Sigmoid colon (tissue), 7 donors: ENCODE measurements at regions of chr5 and their contacts with region 1.

Region 1: DNA sequence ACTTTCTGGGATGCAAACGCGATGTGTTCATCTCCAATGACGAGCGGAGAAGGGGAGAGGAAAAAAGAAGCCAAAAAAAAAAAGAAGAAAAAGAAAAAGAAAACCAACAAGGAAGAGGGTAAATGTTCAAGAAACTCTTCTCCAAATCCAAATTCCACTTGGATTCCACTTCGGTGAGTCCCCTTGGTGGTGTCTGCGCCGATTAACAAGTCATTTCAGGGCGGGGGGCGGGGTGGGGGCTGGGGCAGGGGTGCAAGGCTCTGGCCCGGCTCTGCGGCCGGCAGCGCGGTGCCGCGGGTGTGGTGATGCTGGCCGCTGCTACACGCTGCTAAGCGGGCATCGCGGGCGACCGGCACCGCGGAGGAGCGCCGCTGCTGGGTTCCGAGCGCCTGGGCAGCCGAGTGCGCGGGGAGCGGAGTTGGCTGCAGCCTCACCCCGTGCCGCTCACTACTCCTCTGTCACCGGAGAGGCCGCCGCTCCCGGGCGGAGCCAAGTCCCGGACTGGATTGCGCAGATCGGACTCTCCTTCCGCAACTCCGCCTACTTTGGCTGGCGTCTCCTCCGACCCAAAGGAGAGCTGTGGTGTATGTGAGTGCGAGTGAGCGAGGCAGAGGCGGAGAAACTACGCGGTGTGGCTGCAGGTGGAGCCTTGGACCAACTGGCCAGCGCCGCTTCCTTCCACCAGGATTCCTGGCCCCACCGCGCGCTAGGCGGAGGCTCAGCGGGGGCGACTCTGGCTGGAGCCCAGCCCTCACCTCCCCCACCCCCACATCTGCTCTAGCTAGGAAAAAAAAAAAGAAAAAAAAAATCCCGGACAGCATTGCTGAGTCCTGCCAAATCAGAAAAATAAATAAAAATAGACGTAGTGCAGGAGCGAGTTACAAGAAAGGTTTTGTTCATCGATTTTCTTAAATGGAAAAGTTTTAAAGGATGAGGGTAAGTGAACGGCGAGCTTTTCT is at the start of gene SEMA6A:
- DNase-seq: peak; percentile 97
- H3K4me3 ChIP-seq: peak within 1 kb of the TSS; percentile 79 to 83 (median 82)
- H3K27ac ChIP-seq: peak within 1 kb of the TSS; percentile 80 to 85 (median 82)
- H3K4me1 ChIP-seq: peaks cover 6 to 38% (median 20%) of the 10 kb centered on the region in 4 donors
- H3K27me3 ChIP-seq: no peaks in the 10 kb centered on the region
- CTCF ChIP-seq: peak in 1 of 4 experiments; percentile 29
- EP300 ChIP-seq: peak in 1 of 4 donors; percentile 10
- POLR2A ChIP-seq: peak; percentile 33 to 80
- total RNA-seq, gene SEMA6A: 25.0 to 55.7 (median 39.5) TPM

Region 2: DNA sequence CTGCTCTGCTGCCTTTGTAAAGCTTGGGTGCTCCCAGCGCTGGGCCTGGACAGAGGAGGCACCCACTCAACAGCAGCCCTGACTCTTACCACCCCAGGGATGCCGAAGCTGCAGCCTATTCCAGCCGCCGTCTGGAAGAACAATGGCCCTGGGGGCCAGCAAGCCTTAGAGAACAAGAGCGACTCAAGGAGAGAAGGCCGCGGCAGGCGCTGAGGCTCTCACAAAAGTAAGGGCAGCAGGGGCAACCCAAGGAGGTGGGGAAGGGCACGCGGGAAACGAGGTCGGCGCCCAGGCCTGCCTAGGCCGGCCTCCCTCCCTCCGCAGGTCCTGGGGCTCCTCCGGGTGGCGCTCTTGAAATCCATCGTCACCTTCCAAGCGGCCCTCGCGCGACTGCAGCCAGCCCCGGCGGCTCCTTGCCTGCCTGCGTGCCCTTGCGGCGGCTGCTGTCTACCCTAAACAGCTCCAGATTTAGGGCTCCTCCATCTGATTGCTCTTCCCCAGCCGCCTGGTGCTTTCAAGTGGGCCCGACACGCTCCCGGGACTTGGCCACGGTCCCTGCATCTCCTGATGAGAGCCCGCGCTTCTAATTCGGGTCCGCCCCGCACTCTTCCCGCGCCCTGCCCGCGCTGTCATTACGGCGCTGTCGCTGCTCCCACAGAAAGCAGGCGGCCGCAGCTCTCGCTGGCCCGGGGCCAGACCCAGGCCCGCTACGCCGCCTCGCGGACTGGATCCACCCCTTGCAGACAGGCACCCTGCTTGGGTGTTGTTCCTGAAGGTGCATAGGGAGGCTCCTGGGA is 213.3 kb before region 1 on chr5:
- intact Hi-C with region 1: loop called (anchors 2 kb)
- DNase-seq: peak; percentile 84
- H3K4me3 ChIP-seq: peak overlapping the region; percentile 30 to 52 (median 47)
- H3K27ac ChIP-seq: peak overlapping the region; percentile 31 to 77 (median 74)
- H3K4me1 ChIP-seq: peaks cover 0 to 42% (median 30%) of the 10 kb centered on the region in 4 donors
- H3K27me3 ChIP-seq: no peaks in the 10 kb centered on the region
- CTCF ChIP-seq: peak in 3 of 4 experiments; percentile 22 to 40 (median 38)
- EP300 ChIP-seq: no peak
- POLR2A ChIP-seq: no peak

Region 3: DNA sequence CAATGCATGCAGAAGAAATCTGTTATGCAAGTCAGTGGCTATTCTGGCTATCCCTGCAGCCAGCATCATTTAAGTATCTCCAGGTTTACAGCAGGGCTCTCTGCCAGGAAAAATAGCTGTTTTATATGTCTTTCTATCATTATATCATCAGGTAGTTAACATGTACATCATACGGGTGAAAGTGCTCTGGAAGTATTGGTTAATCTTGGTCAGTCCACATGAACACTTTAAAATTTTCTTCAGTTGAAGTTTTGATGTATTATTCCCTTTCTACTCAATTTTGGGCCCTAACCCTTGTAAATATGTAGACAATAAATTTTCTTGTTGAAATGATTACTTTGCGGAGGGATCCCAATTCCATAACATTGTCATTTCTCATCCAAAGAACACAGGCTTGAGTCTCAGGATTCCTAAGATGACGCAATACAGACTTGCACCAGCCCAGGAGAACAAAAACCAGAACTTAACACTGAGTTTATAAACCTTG is 67.6 kb before region 1 on chr5:
- intact Hi-C with region 1: loop called (anchors 2 kb)
- DNase-seq: peak; percentile 80
- H3K4me3 ChIP-seq: no peak overlapping the region
- H3K27ac ChIP-seq: peak overlapping the region; percentile 29 to 77 (median 57)
- H3K4me1 ChIP-seq: peaks cover 0 to 98% (median 85%) of the 10 kb centered on the region in 4 donors
- H3K27me3 ChIP-seq: no peaks in the 10 kb centered on the region
- CTCF ChIP-seq: no peak
- EP300 ChIP-seq: peak; percentile 38 to 79 (median 56)
- POLR2A ChIP-seq: no peak

Region 4: GRCh38 chr5:116733991-116734975 is 159.6 kb after region 1 on chr5:
- intact Hi-C with region 1: loop called (anchors 10 kb)
- DNase-seq: no peak
- H3K4me3 ChIP-seq: no peak overlapping the region
- H3K27ac ChIP-seq: peak overlapping the region in 3 of 4 donors; percentile 52 to 70 (median 56)
- H3K4me1 ChIP-seq: peaks cover 0 to 60% (median 40%) of the 10 kb centered on the region in 4 donors
- H3K27me3 ChIP-seq: no peaks in the 10 kb centered on the region
- CTCF ChIP-seq: no peak
- EP300 ChIP-seq: no peak
- POLR2A ChIP-seq: no peak

Region 5: GRCh38 chr5:116806836-116807235 is 232.2 kb after region 1 on chr5:
- intact Hi-C with region 1: no loop called
- DNase-seq: no peak
- H3K4me3 ChIP-seq: no peak overlapping the region
- H3K27ac ChIP-seq: no peak overlapping the region
- H3K4me1 ChIP-seq: no peaks in the 10 kb centered on the region
- H3K27me3 ChIP-seq: no peaks in the 10 kb centered on the region
- CTCF ChIP-seq: no peak
- EP300 ChIP-seq: no peak
- POLR2A ChIP-seq: no peak

Region 6: DNA sequence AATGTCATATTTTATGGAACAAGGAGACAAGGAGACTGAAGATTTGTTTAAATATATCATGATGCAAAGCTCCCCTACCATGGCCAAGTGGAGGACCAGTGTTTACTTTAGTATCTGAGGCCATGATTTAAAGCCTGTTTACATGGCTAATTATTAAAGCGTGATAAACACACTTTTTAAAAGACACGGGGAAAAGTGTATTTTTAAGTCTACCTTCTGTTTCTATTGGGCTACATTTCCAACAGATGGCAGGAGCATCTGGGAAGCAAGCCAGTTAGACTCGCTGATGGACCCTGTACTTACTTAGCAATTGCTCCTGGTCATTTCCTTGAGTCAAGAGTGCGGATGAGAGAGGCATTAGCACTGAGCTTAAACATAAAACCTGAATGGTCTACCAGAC is 480.3 kb after region 1 on chr5:
- intact Hi-C with region 1: loop called (anchors 10 kb)
- DNase-seq: no peak
- H3K4me3 ChIP-seq: no peak overlapping the region
- H3K27ac ChIP-seq: peak overlapping the region in 3 of 4 donors; percentile 15 to 37 (median 26)
- H3K4me1 ChIP-seq: peaks cover 0 to 25% (median 18%) of the 10 kb centered on the region in 4 donors
- H3K27me3 ChIP-seq: no peaks in the 10 kb centered on the region
- CTCF ChIP-seq: no peak
- EP300 ChIP-seq: no peak
- POLR2A ChIP-seq: no peak

Region 7: DNA sequence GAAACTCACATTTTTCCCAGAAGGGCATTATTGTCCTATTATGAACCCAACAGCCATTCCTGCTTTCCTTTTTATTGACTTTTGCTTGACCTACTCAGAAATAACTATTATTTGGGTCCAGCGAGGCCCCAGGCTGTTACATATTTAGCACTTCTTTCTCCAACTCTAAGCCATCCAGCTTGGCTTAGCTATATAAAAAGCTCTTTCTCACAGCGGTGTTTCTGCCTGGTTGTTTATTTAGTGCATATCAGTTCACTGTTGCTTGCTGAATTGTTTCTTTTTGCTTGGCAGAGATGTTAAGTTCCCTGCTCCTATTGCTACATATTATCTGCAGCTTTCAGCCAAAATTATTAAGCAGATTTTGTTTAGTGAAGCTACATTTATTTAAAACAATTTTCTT is 1156.8 kb after region 1 on chr5:
- intact Hi-C with region 1: loop called (anchors 10 kb)
- DNase-seq: no peak
- H3K4me3 ChIP-seq: no peak overlapping the region
- H3K27ac ChIP-seq: peak overlapping the region in 3 of 4 donors; percentile 0 to 20 (median 7)
- H3K4me1 ChIP-seq: peaks cover 0 to 19% (median 3%) of the 10 kb centered on the region in 4 donors
- H3K27me3 ChIP-seq: no peaks in the 10 kb centered on the region
- CTCF ChIP-seq: no peak
- EP300 ChIP-seq: no peak
- POLR2A ChIP-seq: no peak